GM10248 (cell line): ENCODE measurements at regions of chr20 and their contacts with region 1.

Region 1: GRCh38 chr20:23420943-23421931 is at the start of gene NAPB:
- DNase-seq: peak; percentile 96
- CTCF ChIP-seq: peak; percentile 22

Region 2: DNA sequence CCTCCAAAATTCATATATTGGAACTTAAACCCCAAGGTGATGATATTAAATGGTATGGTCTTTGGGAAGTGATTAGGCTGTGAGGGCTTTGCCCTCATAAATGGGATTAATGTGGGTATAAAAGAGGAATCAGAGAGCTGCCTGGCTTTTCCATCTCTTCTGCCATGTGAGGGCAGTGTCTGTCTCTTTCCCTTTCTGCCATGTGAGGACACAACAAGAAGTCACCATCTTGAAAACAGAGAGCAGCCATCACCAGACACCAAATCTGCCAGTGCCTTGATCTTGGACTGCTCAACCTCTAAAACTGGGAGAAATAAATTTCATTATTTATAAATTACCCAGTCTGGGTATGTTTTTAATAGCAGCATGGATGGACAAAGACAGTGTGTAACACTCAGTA is 1452.8 kb before region 1 on chr20:
- CTCF ChIA-PET with region 1: no interaction called
- POLR2A ChIA-PET with region 1: no interaction called
- DNase-seq: no peak
- CTCF ChIP-seq: no peak

Region 3: DNA sequence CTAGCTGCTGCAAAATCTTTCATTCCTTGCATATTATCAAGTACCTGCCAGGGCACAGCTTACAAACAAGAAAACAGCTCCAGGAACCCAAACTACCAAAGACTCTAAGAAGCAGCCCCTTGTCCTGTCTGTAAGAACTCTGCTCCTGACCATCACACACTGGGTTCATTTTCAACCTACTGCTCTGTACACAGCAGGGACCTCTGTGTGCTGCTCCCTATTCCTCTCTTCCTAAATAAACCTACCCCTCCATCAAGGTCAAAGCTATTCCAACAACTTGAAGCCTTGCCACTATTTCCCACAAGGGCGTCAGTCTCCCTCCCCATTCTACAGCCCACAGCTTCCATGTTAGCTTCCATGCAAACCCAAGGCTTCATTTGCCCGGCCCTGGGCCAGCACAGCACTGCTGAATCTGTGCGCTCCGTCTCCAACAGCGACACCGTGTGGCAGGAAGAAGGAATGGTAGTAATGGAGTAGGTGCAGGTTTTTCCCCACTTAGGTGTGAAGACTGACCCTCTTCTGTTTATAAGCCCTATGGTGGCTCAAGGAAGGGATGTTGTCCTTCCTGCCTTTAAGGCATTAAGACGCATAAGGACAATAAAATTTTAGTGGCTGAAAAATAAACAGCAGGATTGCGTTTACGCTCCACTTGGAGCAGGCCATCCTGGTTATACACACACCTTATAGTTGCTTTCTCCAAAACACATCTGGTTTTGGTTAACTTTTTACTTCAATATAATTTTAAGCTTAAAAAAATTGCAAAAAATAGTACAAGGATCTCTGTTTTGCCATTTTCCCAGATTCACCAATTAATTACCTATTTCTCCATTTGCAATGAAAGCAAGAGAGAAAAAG is 185.8 kb before region 1 on chr20:
- CTCF ChIA-PET with region 1: no interaction called
- POLR2A ChIA-PET with region 1: no interaction called
- DNase-seq: peak; percentile 45
- CTCF ChIP-seq: peak; percentile 57

Region 4: GRCh38 chr20:23350196-23350903 is 70.9 kb before region 1 on chr20 and contains the start of gene NXT1:
- CTCF ChIA-PET with region 1: interaction called, 4 read pairs
- POLR2A ChIA-PET with region 1: interaction called, 10 read pairs
- DNase-seq: peak; percentile 92
- CTCF ChIP-seq: peak; percentile 15

Region 5: DNA sequence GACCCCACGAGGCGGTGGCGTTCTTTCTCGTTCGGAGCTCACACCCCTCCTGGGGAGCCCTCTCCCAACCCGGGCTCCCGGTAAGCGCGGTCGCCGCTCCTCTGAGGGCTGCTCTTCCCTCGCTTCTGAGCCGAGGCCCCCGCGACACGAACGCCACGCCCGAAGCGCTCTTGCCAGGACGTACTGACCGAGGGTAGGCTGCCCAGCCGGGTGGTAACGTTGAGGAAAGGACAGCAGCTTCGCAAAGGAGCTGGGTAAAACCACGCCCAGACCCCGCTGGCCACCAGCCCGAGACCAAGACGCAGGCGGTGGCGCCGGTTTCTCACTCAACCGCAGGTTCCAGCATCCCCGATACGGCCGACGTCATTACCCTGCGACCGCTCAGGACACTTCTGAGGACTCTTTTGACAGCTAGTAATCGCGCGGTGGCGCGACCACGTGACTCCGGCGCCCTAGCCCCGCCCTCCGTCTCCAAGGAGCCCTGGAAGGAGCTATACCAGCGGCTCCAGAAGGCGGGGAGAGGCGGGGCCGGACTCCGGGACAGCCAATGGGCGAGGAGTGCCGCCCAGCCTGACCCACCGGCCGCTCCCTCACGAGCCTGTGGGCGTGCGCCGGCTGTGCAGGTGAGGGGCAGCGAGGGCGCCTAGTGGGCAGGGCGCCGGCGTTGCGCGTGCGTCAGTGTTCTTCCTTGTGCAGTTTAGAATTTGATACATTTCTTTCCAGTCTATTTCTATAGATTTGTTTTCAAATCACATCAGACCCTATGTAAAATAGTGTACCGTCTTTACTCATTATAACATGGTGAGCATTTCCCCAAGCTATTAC is 63.3 kb before region 1 on chr20:
- CTCF ChIA-PET with region 1: interaction called, 12 read pairs
- POLR2A ChIA-PET with region 1: no interaction called
- DNase-seq: peak; percentile 94
- CTCF ChIP-seq: no peak

Region 6: DNA sequence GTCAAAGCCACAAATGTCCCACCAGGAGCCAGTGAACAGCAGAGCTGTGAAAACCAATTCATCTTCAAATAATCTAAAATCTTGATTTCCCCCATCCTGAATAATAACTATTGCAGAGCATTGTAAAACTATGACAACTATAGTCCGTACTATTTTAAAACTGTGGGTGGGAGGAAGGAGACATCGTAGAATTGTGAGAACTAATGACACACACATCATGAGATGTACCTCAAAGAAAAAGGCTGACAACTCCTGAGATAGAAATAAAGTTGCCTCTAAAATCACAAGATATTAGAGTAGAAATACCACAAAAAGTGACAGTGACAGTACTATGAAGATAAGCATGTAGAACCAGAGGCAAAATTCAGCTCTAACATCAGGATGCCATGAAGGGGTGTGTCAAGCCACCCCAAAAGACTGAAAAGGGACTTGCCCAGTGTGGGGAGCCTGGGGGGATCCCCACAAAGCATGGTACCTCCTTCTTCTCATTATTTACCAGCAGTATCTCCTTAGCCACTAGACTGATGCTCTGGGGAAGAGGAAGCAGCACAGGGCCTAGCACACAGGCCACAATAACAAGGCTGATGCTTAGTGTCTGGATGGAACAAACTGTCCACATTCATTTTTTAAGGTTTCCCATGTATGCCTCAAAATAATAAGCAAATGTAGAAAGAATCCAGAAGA is 13.3 kb before region 1 on chr20:
- CTCF ChIA-PET with region 1: interaction called, 73 read pairs
- POLR2A ChIA-PET with region 1: interaction called, 4 read pairs
- DNase-seq: peak; percentile 49
- CTCF ChIP-seq: no peak